ENCODE measurements at regions of chr19 and their contacts with region 1.

Region 1: DNA sequence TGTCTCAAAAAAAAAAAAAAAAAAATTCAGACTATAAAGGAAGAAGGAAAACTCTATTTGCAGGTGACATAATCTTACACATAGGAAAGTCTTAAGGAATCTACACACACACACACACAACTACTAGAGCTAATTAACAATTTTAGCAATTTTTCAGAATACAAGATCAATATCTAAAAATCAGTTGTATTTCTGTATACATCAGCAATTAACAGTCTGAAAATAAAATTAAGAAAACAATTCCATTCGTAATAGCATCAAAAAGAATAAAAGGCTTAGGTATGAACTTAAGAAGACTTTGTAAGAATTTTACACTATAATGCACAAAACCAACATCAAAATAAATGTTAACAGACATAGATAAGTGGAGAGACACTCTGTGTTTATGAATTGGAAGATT is 15.6 kb upstream of the CALM3 start:
- DNase-seq: no peak
- H3K4me3 ChIP-seq: no peak overlapping the region
- H3K27ac ChIP-seq: no peak overlapping the region
- H3K4me1 ChIP-seq: no peaks in the 10 kb centered on the region
- H3K27me3 ChIP-seq: no peaks in the 10 kb centered on the region
- CTCF ChIP-seq: no peak

Region 2: GRCh38 chr19:46546194-46546896 is 39.2 kb before region 1 on chr19:
- CTCF ChIA-PET with region 1: no interaction called
- POLR2A ChIA-PET with region 1: no interaction called
- intact Hi-C with region 1: no loop called
- DNase-seq: peak; percentile 61 to 85
- H3K4me3 ChIP-seq: no peak overlapping the region
- H3K27ac ChIP-seq: no peak overlapping the region
- H3K4me1 ChIP-seq: peaks cover 4% of the 10 kb centered on the region
- H3K27me3 ChIP-seq: no peaks in the 10 kb centered on the region
- CTCF ChIP-seq: no peak

Region 3: DNA sequence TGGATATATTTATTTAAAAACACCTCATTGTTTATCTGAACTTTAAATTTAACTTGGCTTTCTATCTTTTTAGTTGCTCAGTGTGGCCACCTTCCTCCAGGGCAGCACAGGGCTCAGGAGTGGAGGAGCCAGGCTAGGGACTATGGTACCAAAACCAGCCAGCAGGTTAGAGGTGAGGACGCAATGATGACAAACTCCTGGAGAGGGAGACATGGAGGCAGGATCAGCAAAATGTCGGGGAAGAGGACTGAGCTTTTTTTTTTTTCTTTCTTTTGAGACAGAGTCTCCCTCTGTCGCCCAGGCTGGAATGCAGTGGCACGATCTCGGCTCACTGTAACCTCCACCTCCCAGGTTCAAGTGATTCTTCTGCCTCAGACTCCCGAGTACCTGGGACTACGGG is 14.0 kb before region 1 on chr19:
- CTCF ChIA-PET with region 1: interaction called, 10 read pairs
- POLR2A ChIA-PET with region 1: no interaction called
- intact Hi-C with region 1: no loop called
- DNase-seq: peak; percentile 42 to 51
- H3K4me3 ChIP-seq: no peak overlapping the region
- H3K27ac ChIP-seq: no peak overlapping the region
- H3K4me1 ChIP-seq: no peaks in the 10 kb centered on the region
- H3K27me3 ChIP-seq: no peaks in the 10 kb centered on the region
- CTCF ChIP-seq: peak; percentile 39; the same call in 1 of the 2 replicates

Region 4: GRCh38 chr19:47600246-47601179 is 1015.0 kb after region 1 on chr19:
- CTCF ChIA-PET with region 1: no interaction called
- POLR2A ChIA-PET with region 1: no interaction called
- intact Hi-C with region 1: no loop called
- DNase-seq: peak; percentile 99
- H3K4me3 ChIP-seq: peak overlapping the region; percentile 80
- H3K27ac ChIP-seq: peak overlapping the region; percentile 87
- H3K4me1 ChIP-seq: peaks cover 29% of the 10 kb centered on the region
- H3K27me3 ChIP-seq: no peaks in the 10 kb centered on the region
- CTCF ChIP-seq: no peak